ENCODE measurements at regions of chr22 and their contacts with region 1.

Region 1: GRCh38 chr22:31080848-31081649 is at the start of gene SMTN:
- DNase-seq: peak; percentile 93
- ATAC-seq: peak; percentile 77
- H3K4me3 Mint-ChIP-seq: peak within 1 kb of the TSS; percentile 88
- H3K27ac Mint-ChIP-seq: peak within 1 kb of the TSS; percentile 86
- H3K4me1 Mint-ChIP-seq: peaks cover 37% of the 10 kb centered on the region
- H3K27me3 Mint-ChIP-seq: no peaks in the 10 kb centered on the region
- total RNA-seq, gene SMTN: 51.0 to 61.7 TPM

Region 2: DNA sequence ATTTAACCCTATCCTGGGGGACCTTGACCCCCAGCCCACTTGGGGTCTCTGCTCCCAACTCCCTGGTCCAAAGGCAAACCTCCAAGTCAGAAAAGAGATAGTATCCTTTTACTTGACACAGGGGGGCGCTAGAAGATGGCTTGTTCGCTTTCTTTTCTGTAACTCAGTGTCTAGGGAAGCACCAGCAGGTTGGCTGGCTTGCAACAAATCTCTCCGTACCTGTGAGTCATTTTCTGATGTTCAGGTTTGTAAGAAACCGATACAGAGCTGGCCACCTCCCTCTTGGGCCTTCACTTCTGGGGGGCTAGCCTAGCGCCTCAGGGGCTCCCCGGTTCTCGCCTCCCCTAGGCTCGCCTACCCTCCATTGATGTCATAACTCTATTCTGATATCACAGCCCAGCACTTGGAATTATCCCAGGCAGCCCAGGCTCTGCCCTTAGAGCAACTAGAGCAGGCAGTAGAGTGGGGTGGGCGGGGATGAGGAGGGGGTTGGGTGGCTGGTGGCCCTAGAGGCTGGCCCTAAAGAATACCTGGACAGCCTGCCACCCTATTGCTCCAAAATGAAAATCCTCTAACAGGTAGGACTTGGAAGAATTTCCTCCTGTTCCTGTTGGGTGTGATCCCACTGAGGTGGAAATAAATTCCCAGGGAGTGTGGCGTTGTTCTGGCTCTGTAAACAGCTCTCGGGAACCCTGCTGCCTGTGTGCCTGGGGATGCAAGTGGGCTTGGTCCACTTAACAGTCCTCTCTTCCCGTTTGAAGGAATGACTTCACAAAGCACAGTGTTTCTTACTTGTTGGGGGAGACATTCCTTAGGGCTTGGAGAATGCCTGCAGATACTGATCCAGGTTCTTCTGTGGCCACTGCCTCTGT is 317.0 kb before region 1 on chr22:
- CTCF ChIA-PET with region 1: interaction called, 15 read pairs
- POLR2A ChIA-PET with region 1: no interaction called
- DNase-seq: peak; percentile 74
- ATAC-seq: peak; percentile 81
- H3K4me3 Mint-ChIP-seq: no peak overlapping the region
- H3K27ac Mint-ChIP-seq: no peak overlapping the region
- H3K4me1 Mint-ChIP-seq: no peaks in the 10 kb centered on the region
- H3K27me3 Mint-ChIP-seq: peaks cover 3% of the 10 kb centered on the region

Region 3: GRCh38 chr22:30940685-30941362 is 140.2 kb before region 1 on chr22:
- CTCF ChIA-PET with region 1: interaction called, 37 read pairs
- POLR2A ChIA-PET with region 1: interaction called, 3 read pairs
- DNase-seq: peak; percentile 49
- ATAC-seq: peak; percentile 43
- H3K4me3 Mint-ChIP-seq: peak overlapping the region; percentile 56
- H3K27ac Mint-ChIP-seq: peak overlapping the region; percentile 88
- H3K4me1 Mint-ChIP-seq: peaks cover 61% of the 10 kb centered on the region
- H3K27me3 Mint-ChIP-seq: no peaks in the 10 kb centered on the region

Region 4: DNA sequence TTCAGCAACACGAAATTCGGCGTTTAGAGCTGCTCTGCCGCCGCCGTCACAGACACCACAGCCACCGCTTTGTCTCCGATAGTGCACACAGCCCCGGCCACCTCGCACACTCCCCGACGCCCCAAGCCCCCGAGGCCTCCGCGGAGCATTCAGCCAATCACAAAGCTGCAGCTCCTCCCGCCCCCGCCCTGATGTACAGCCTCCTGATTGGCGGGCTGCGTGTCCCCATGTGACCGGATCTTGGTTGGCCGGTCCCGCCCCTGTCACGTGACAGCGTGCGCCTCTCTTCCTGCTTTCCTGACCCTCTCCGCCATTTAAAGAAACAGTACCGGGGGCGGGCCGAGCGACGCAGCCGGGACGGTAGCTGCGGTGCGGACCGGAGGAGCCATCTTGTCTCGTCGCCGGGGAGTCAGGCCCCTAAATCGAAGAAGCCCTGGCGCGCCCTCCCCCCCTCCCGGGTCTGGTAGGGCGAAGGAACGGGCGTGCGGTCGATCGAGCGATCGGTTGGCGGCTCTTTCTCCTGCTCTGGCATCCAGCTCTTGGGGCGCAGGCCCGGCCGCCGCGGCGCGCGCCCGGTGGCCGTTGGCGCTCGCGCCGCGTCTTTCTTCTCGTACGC is 112.0 kb before region 1 on chr22 and contains the start of gene TUG1:
- CTCF ChIA-PET with region 1: interaction called, 30 read pairs
- POLR2A ChIA-PET with region 1: interaction called, 21 read pairs
- DNase-seq: peak; percentile 98
- ATAC-seq: peak; percentile 93
- H3K4me3 Mint-ChIP-seq: peak within 1 kb of the TSS; percentile 89
- H3K27ac Mint-ChIP-seq: peak within 1 kb of the TSS; percentile 99
- H3K4me1 Mint-ChIP-seq: peaks cover 60% of the 10 kb centered on the region
- H3K27me3 Mint-ChIP-seq: no peaks in the 10 kb centered on the region
- total RNA-seq, gene TUG1: 67.3 to 72.3 TPM

Region 5: GRCh38 chr22:31107178-31107893 is 26.3 kb after region 1 on chr22 and contains the start of gene SELENOM:
- CTCF ChIA-PET with region 1: interaction called, 22 read pairs
- POLR2A ChIA-PET with region 1: no interaction called
- DNase-seq: peak; percentile 90
- ATAC-seq: peak; percentile 97
- H3K4me3 Mint-ChIP-seq: peak within 1 kb of the TSS; percentile 86
- H3K27ac Mint-ChIP-seq: peak within 1 kb of the TSS; percentile 72
- H3K4me1 Mint-ChIP-seq: peaks cover 10% of the 10 kb centered on the region
- H3K27me3 Mint-ChIP-seq: no peaks in the 10 kb centered on the region
- total RNA-seq, gene SELENOM: 0.76 to 0.87 TPM

Measured in activated CD8-positive, alpha-beta T cell treated with anti-CD3 and anti-CD28 coated beads, Interleukin-2, amount 10 ng/mL, durations not matched to agents 7 days and 5 days (primary cell).